ENCODE measurements at regions of chr2 and their contacts with region 1.

Region 1: DNA sequence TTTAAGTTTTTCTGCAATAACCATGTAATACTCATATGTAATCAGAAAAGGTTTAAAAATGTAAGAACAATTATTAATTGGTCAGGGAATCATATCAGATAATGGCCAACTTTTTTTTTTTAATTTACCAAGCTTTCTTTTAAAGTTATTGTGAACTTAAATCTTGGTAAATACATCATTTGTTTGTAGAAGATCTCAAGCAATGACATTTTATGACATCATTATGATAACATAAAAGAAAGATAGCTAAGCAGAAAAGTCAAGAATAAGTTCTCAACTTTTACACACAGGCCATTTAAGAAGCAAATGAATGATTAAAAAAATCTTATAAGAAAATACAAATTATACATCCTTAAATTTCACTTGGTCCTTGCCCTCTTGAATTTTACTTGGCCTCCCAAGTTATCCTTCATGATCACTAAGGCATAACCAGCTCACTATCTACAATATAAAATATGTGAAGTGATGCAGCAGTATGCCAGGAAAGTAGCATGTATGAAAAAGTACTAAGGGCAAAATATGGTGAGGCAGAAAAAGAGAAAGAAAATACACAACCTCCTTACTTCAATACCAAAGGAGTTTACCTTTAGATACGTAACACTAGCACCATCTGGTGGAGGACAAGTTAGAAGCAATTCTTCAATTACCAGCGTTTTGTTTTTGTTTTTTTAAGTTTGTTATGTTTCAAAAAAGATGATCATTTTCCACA is 116.6 kb downstream of the SRBD1 start:
- DNase-seq: no peak
- H3K4me3 Mint-ChIP-seq: no peak overlapping the region
- H3K27ac Mint-ChIP-seq: no peak overlapping the region
- H3K4me1 Mint-ChIP-seq: peaks cover 40% of the 10 kb centered on the region
- H3K27me3 Mint-ChIP-seq: no peaks in the 10 kb centered on the region

Region 2: GRCh38 chr2:44616667-44617155 is 877.7 kb before region 1 on chr2:
- CTCF ChIA-PET with region 1: no interaction called
- POLR2A ChIA-PET with region 1: no interaction called
- intact Hi-C with region 1: loop called (anchors 5 kb)
- DNase-seq: no peak
- H3K4me3 Mint-ChIP-seq: no peak overlapping the region
- H3K27ac Mint-ChIP-seq: no peak overlapping the region
- H3K4me1 Mint-ChIP-seq: peaks cover 6% of the 10 kb centered on the region
- H3K27me3 Mint-ChIP-seq: no peaks in the 10 kb centered on the region

Region 3: GRCh38 chr2:44928483-44929158 is 565.8 kb before region 1 on chr2:
- CTCF ChIA-PET with region 1: no interaction called
- POLR2A ChIA-PET with region 1: no interaction called
- intact Hi-C with region 1: no loop called
- DNase-seq: peak; percentile 11
- H3K4me3 Mint-ChIP-seq: no peak overlapping the region
- H3K27ac Mint-ChIP-seq: no peak overlapping the region
- H3K4me1 Mint-ChIP-seq: peaks cover 17% of the 10 kb centered on the region
- H3K27me3 Mint-ChIP-seq: peaks cover 72% of the 10 kb centered on the region

Region 4: DNA sequence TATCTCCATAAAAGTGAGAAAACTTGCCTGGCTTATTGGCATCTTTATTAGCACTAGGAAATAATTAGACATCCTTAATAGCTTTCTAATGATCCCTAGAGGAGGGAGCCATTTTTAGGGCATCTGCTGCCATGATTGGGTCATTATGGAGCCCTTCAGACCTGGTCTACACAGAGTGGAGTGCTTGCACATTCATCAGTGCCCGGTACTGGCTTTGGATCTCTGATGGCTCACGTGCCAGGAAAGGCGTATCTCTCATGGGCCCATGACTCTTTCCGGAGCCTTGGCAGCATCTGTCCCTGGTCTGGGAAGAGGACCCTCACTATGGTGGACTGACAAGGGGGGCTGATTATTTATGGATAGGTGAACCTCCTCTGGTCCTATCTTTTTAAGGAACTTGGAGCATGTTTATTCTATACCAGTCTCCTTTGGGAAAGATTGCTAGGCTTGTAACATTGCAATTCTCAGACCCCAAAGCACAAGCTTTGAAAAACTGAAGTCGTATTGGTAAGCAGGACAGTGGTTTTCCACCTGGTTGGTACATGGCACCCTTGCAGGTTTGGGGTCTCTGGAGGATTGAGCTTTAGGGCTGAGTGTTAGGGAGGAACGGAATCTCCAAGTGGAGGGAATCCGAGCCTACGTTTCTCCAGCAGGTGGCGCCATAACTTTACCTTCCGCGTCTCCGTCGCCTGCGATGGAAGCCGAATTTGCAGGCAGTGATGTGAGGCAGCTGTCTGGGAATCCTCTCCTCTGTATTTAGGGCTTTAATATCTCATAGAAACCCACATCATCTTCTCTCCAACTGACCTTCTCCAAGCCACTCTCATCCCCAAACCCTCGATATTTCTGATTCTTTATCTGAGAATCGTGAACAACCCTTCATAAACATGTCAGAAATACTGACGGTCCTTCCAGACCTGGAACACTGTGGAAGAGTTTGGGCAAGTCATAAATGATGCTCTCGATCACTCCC is 513.0 kb before region 1 on chr2:
- CTCF ChIA-PET with region 1: interaction called, 134 read pairs
- POLR2A ChIA-PET with region 1: no interaction called
- intact Hi-C with region 1: loop called (anchors 1 kb)
- DNase-seq: peak; percentile 75
- H3K4me3 Mint-ChIP-seq: no peak overlapping the region
- H3K27ac Mint-ChIP-seq: no peak overlapping the region
- H3K4me1 Mint-ChIP-seq: peaks cover 3% of the 10 kb centered on the region
- H3K27me3 Mint-ChIP-seq: peaks cover 26% of the 10 kb centered on the region

Region 5: GRCh38 chr2:45329045-45329677 is 165.3 kb before region 1 on chr2:
- CTCF ChIA-PET with region 1: no interaction called
- POLR2A ChIA-PET with region 1: no interaction called
- intact Hi-C with region 1: no loop called
- DNase-seq: no peak
- H3K4me3 Mint-ChIP-seq: no peak overlapping the region
- H3K27ac Mint-ChIP-seq: no peak overlapping the region
- H3K4me1 Mint-ChIP-seq: no peaks in the 10 kb centered on the region
- H3K27me3 Mint-ChIP-seq: peaks cover 4% of the 10 kb centered on the region

Region 6: GRCh38 chr2:45353879-45354278 is 140.5 kb before region 1 on chr2:
- CTCF ChIA-PET with region 1: no interaction called
- POLR2A ChIA-PET with region 1: no interaction called
- intact Hi-C with region 1: no loop called
- DNase-seq: no peak
- H3K4me3 Mint-ChIP-seq: no peak overlapping the region
- H3K27ac Mint-ChIP-seq: no peak overlapping the region
- H3K4me1 Mint-ChIP-seq: no peaks in the 10 kb centered on the region
- H3K27me3 Mint-ChIP-seq: no peaks in the 10 kb centered on the region

Region 7: GRCh38 chr2:45554073-45554741 is 59.8 kb after region 1 on chr2:
- CTCF ChIA-PET with region 1: interaction called, 7 read pairs
- POLR2A ChIA-PET with region 1: interaction called, 4 read pairs
- intact Hi-C with region 1: loop called (anchors 1 kb)
- DNase-seq: peak; percentile 16
- H3K4me3 Mint-ChIP-seq: peak overlapping the region; percentile 12
- H3K27ac Mint-ChIP-seq: peak overlapping the region; percentile 77
- H3K4me1 Mint-ChIP-seq: peaks cover 28% of the 10 kb centered on the region
- H3K27me3 Mint-ChIP-seq: no peaks in the 10 kb centered on the region

Region 8: GRCh38 chr2:45611020-45611737 is 116.8 kb after region 1 on chr2 and contains the start of gene SRBD1:
- CTCF ChIA-PET with region 1: no interaction called
- POLR2A ChIA-PET with region 1: interaction called, 4 read pairs
- intact Hi-C with region 1: loop called (anchors 1 kb)
- DNase-seq: peak; percentile 96
- H3K4me3 Mint-ChIP-seq: peak within 1 kb of the TSS; percentile 95
- H3K27ac Mint-ChIP-seq: peak within 1 kb of the TSS; percentile 94
- H3K4me1 Mint-ChIP-seq: peaks cover 18% of the 10 kb centered on the region
- H3K27me3 Mint-ChIP-seq: no peaks in the 10 kb centered on the region
- total RNA-seq, gene SRBD1: 19.3 to 20.5 TPM